GM12878 (cell line): ENCODE measurements at regions of chr2 and their contacts with region 1.

Region 1: GRCh38 chr2:10434886-10435819 is 13.0 kb downstream of the ODC1 start:
- DNase-seq: no peak
- ATAC-seq: peak; percentile 86
- H3K4me3 ChIP-seq: no peak overlapping the region
- H3K27ac ChIP-seq: no peak overlapping the region
- H3K4me1 ChIP-seq: peaks cover 3% of the 10 kb centered on the region; the same call in 1 of the 2 replicates
- H3K27me3 ChIP-seq: no peaks in the 10 kb centered on the region
- CTCF ChIP-seq: peak; percentile 96 to 99 (median 98)
- EP300 ChIP-seq: no peak
- POLR2A ChIP-seq: no peak
- RAD21 ChIP-seq: peak; percentile 98

Region 2: DNA sequence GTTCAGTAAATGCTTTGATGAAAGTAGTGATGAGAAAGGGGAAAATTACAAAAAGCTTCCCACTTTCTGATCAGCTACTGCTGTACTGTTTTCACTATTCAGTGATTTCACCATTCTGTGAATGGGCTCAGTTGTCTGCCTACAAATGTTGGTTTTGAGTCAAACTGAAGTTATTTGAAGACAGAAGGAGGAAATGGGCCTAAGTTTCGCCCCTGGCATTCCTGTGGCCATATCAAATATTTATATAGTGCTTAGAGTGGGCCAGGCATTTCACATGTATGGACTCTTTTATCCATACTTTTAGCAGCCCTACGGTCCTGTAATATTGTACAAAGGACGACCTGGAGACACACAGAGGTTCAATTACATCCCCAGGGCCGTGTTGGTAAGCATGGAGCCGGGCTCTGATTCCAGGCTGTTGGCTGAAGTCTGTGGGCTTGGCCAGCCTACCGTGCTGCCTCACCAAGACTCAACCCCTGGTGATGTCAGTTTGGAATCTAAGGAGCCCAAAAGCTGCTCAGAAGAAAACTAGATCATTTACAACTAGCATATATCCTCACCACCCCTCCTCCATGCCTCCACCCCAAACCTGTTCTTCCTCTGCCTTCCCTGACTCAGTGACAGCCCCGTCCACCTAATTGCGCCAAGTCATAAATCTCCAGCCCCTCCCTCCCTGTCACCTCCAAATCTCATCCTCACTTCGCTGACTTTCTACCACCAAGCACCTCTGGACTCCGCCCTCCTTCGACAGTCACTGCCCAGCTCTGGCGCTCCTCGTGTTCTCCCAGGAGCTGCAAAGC is 493.8 kb before region 1 on chr2:
- CTCF ChIA-PET with region 1: no interaction called
- POLR2A ChIA-PET with region 1: no interaction called
- RAD21 ChIA-PET with region 1: no interaction called
- SMC1A ChIA-PET with region 1: no interaction called
- in situ Hi-C with region 1: no loop called
- intact Hi-C with region 1: no loop called
- DNase-seq: no peak
- ATAC-seq: peak; percentile 27; the same call in 2 of the 3 replicates
- H3K4me3 ChIP-seq: no peak overlapping the region
- H3K27ac ChIP-seq: no peak overlapping the region
- H3K4me1 ChIP-seq: peaks cover 6% of the 10 kb centered on the region; the same call in 1 of the 2 replicates
- H3K27me3 ChIP-seq: no peaks in the 10 kb centered on the region
- CTCF ChIP-seq: no peak
- EP300 ChIP-seq: no peak
- POLR2A ChIP-seq: no peak
- RAD21 ChIP-seq: no peak

Region 3: DNA sequence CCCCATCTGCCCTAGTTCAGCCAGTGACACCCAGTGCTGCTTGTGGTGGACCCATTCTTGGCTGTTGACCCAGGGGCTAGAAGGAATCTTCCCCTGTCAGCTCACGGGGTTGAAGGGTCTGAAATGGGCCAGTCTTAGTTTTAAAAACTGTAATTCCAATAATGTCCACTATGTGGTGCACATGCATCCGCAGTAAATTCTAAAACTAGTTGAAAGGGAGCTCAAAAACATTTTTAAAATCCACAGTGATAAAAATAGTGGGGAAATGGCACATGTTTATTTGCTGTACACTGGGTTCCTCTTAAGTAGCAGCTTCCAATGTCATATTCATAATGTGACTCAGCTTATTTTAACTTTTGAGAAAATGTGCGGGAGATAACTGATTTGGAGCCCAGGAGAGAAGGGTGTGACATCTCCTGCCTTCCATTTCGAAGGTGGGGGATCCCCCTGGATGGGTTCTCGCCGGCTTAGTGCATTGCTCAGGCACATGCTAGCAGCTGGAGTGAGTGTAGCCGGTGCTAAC is 450.9 kb before region 1 on chr2:
- CTCF ChIA-PET with region 1: interaction called, 20 read pairs
- POLR2A ChIA-PET with region 1: no interaction called
- RAD21 ChIA-PET with region 1: interaction called, 6 read pairs
- SMC1A ChIA-PET with region 1: interaction called, 6 read pairs
- in situ Hi-C with region 1: no loop called
- intact Hi-C with region 1: no loop called
- DNase-seq: peak; percentile 13
- ATAC-seq: peak; percentile 88
- H3K4me3 ChIP-seq: no peak overlapping the region
- H3K27ac ChIP-seq: no peak overlapping the region
- H3K4me1 ChIP-seq: no peaks in the 10 kb centered on the region
- H3K27me3 ChIP-seq: no peaks in the 10 kb centered on the region
- CTCF ChIP-seq: peak; percentile 59 to 70 (median 63)
- EP300 ChIP-seq: no peak
- POLR2A ChIP-seq: no peak
- RAD21 ChIP-seq: peak; percentile 60

Region 4: DNA sequence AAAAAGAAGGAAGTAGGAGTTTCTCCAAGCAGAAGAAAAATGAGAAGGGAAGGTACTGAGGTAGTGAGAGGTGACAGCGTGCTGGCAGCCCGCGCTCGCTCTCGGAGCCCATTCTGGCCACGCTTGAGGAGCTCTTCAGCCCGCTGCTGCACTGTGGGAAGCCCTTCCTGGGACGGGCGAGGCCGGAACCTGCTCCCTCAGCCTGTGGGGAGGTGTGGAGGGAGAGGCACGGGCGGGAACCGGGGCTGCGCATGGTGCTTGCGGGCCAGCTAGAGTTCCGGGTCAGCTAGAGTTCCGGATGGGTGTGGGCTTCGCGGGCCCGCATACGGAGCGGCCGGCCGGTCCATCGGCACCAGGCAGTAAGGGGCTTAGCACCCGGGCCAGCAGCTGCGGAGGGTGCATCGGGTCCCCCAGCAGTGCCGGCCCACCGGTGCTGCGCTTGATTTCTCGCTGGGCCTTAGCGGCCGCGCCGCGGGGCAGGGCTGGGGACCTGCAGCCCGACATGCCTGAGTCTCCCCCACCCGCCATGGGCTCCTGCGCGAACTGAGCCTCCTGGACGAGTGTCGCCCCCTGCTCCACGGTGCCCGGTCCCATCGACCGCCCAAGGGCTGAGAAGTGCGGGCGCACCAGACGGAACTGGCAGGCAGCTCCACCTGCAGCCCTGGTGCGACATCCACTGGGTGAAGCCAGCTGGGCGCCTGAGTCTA is 343.8 kb before region 1 on chr2:
- CTCF ChIA-PET with region 1: interaction called, 13 read pairs
- POLR2A ChIA-PET with region 1: no interaction called
- RAD21 ChIA-PET with region 1: interaction called, 13 read pairs
- SMC1A ChIA-PET with region 1: no interaction called
- in situ Hi-C with region 1: no loop called
- intact Hi-C with region 1: no loop called
- DNase-seq: no peak
- ATAC-seq: peak; percentile 71
- H3K4me3 ChIP-seq: no peak overlapping the region; the same call in 1 of the 2 replicates
- H3K27ac ChIP-seq: no peak overlapping the region
- H3K4me1 ChIP-seq: peaks cover 18% of the 10 kb centered on the region
- H3K27me3 ChIP-seq: no peaks in the 10 kb centered on the region
- CTCF ChIP-seq: peak in 1 of 3 experiments; percentile 29; a peak in 1 of 6 replicates
- EP300 ChIP-seq: no peak
- POLR2A ChIP-seq: no peak
- RAD21 ChIP-seq: no peak

Region 5: GRCh38 chr2:10133007-10133647 is 302.0 kb before region 1 on chr2:
- CTCF ChIA-PET with region 1: interaction called, 49 read pairs
- POLR2A ChIA-PET with region 1: interaction called, 6 read pairs
- RAD21 ChIA-PET with region 1: interaction called, 170 read pairs
- SMC1A ChIA-PET with region 1: interaction called, 16 read pairs
- in situ Hi-C with region 1: no loop called
- intact Hi-C with region 1: no loop called
- DNase-seq: no peak
- ATAC-seq: peak; percentile 8
- H3K4me3 ChIP-seq: no peak overlapping the region
- H3K27ac ChIP-seq: no peak overlapping the region
- H3K4me1 ChIP-seq: no peaks in the 10 kb centered on the region
- H3K27me3 ChIP-seq: no peaks in the 10 kb centered on the region
- CTCF ChIP-seq: no peak
- EP300 ChIP-seq: no peak
- POLR2A ChIP-seq: peak; percentile 66
- RAD21 ChIP-seq: no peak

Region 6: GRCh38 chr2:10302479-10303180 is 132.5 kb before region 1 on chr2 and contains the start of gene HPCAL1:
- CTCF ChIA-PET with region 1: interaction called, 16 read pairs
- POLR2A ChIA-PET with region 1: no interaction called
- RAD21 ChIA-PET with region 1: interaction called, 12 read pairs
- SMC1A ChIA-PET with region 1: interaction called, 6 read pairs
- in situ Hi-C with region 1: no loop called
- intact Hi-C with region 1: no loop called
- DNase-seq: peak; percentile 40
- ATAC-seq: peak; percentile 86
- H3K4me3 ChIP-seq: peak within 1 kb of the TSS; percentile 69
- H3K27ac ChIP-seq: peak within 1 kb of the TSS; percentile 61
- H3K4me1 ChIP-seq: peaks cover 16% of the 10 kb centered on the region
- H3K27me3 ChIP-seq: no peaks in the 10 kb centered on the region; a peak in 1 of 4 replicates
- CTCF ChIP-seq: peak; percentile 41 to 52 (median 45); a peak in 5 of 6 replicates
- EP300 ChIP-seq: no peak
- POLR2A ChIP-seq: no peak
- RAD21 ChIP-seq: peak; percentile 19; the same call in 1 of the 2 replicates
- polyA plus RNA-seq, gene HPCAL1: 0.40 to 1.3 TPM

Region 7: GRCh38 chr2:10448208-10448645 is 13.1 kb after region 1 on chr2 and contains the start of gene ODC1:
- CTCF ChIA-PET with region 1: interaction called, 60 read pairs
- POLR2A ChIA-PET with region 1: interaction called, 6 read pairs
- RAD21 ChIA-PET with region 1: interaction called, 66 read pairs
- SMC1A ChIA-PET with region 1: interaction called, 19 read pairs
- in situ Hi-C with region 1: no loop called
- intact Hi-C with region 1: no loop called
- DNase-seq: peak; percentile 53
- ATAC-seq: peak; percentile 76
- H3K4me3 ChIP-seq: peak within 1 kb of the TSS; percentile 77
- H3K27ac ChIP-seq: peak within 1 kb of the TSS; percentile 93
- H3K4me1 ChIP-seq: peaks cover 25% of the 10 kb centered on the region
- H3K27me3 ChIP-seq: no peaks in the 10 kb centered on the region
- CTCF ChIP-seq: no peak
- EP300 ChIP-seq: no peak; a peak in 1 of 4 replicates
- POLR2A ChIP-seq: peak; percentile 87; the same call in 1 of the 2 replicates
- RAD21 ChIP-seq: no peak
- polyA plus RNA-seq, gene ODC1: 131 to 235 TPM

Region 8: GRCh38 chr2:10514743-10515142 is 79.6 kb after region 1 on chr2:
- CTCF ChIA-PET with region 1: no interaction called
- POLR2A ChIA-PET with region 1: no interaction called
- RAD21 ChIA-PET with region 1: no interaction called
- SMC1A ChIA-PET with region 1: no interaction called
- in situ Hi-C with region 1: no loop called
- intact Hi-C with region 1: no loop called
- DNase-seq: no peak
- ATAC-seq: no peak
- H3K4me3 ChIP-seq: no peak overlapping the region
- H3K27ac ChIP-seq: no peak overlapping the region
- H3K4me1 ChIP-seq: no peaks in the 10 kb centered on the region
- H3K27me3 ChIP-seq: no peaks in the 10 kb centered on the region
- CTCF ChIP-seq: no peak
- EP300 ChIP-seq: no peak
- POLR2A ChIP-seq: no peak
- RAD21 ChIP-seq: no peak